H1 (cell line): ENCODE measurements at regions of chr16 and their contacts with region 1.

Region 1: DNA sequence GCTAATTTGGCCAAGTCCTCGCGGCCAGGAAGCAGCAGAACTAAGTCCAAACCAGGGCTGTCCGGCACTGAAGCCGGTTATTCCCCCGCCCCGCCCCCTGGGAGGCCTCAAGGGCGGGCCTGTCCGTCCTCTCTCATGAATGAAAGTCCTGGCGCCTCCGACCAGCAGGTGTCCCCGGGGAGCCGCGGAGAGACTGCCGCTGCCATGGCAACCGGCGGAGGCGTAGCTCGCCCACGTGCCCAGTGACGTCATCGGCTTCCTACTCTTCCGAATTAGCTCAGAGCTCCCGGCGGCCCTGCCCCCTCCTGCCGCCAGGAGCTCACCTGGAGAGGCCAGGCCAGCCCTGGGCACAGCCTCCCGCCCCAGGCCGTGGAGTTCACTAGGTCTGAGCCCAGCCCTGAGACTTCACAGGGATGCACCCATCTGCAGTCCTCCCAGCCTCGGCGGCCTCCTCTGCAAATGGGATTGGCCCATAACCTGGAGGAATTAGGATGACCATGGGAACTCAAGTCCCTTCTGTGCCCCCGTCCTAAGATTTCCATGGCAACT is 1.3 kb downstream of the SPATA2L start:
- DNase-seq: peak; percentile 98
- H3K4me3 ChIP-seq: peak overlapping the region; percentile 49 to 78 (median 74)
- H3K27ac ChIP-seq: peak overlapping the region; percentile 28; the same call in 1 of the 2 replicates
- H3K4me1 ChIP-seq: peaks cover 0 to 11% (median 5%) of the 10 kb centered on the region in 4 experiments; a peak in 5 of 7 replicates
- H3K27me3 ChIP-seq: peaks cover 0 to 9% (median 2%) of the 10 kb centered on the region in 4 experiments; a peak in 3 of 7 replicates
- CTCF ChIP-seq: peak; percentile 22 to 56 (median 32)
- EP300 ChIP-seq: peak in 1 of 2 experiments; percentile 73; a peak in 1 of 3 replicates
- POLR2A ChIP-seq: peak in 1 of 2 experiments; percentile 53; a peak in 1 of 3 replicates
- RAD21 ChIP-seq: peak; percentile 54 to 61

Region 2: GRCh38 chr16:89615596-89616090 is 84.5 kb before region 1 on chr16:
- CTCF ChIA-PET with region 1: interaction called, 15 read pairs
- POLR2A ChIA-PET with region 1: interaction called, 5 read pairs
- DNase-seq: peak in 1 of 2 experiments; percentile 92
- H3K4me3 ChIP-seq: no peak overlapping the region
- H3K27ac ChIP-seq: no peak overlapping the region
- H3K4me1 ChIP-seq: peaks cover 0 to 17% (median 5%) of the 10 kb centered on the region in 4 experiments; a peak in 5 of 7 replicates
- H3K27me3 ChIP-seq: no peaks in the 10 kb centered on the region; a peak in 2 of 7 replicates
- CTCF ChIP-seq: peak; percentile 72 to 90 (median 89)
- EP300 ChIP-seq: no peak
- POLR2A ChIP-seq: no peak
- RAD21 ChIP-seq: peak; percentile 55 to 75

Region 3: GRCh38 chr16:89711601-89712273 is 11.6 kb after region 1 on chr16:
- CTCF ChIA-PET with region 1: interaction called, 36 read pairs
- POLR2A ChIA-PET with region 1: interaction called, 98 read pairs
- DNase-seq: peak in 1 of 2 experiments; percentile 91
- H3K4me3 ChIP-seq: peak overlapping the region; percentile 73 to 91 (median 78)
- H3K27ac ChIP-seq: no peak overlapping the region
- H3K4me1 ChIP-seq: peaks cover 0 to 14% (median 11%) of the 10 kb centered on the region in 4 experiments; a peak in 6 of 7 replicates
- H3K27me3 ChIP-seq: peaks cover 0 to 5% (median 0%) of the 10 kb centered on the region in 4 experiments; a peak in 4 of 7 replicates
- CTCF ChIP-seq: no peak
- EP300 ChIP-seq: no peak
- POLR2A ChIP-seq: peak in 1 of 2 experiments; percentile 79; a peak in 2 of 3 replicates
- RAD21 ChIP-seq: no peak

Region 4: DNA sequence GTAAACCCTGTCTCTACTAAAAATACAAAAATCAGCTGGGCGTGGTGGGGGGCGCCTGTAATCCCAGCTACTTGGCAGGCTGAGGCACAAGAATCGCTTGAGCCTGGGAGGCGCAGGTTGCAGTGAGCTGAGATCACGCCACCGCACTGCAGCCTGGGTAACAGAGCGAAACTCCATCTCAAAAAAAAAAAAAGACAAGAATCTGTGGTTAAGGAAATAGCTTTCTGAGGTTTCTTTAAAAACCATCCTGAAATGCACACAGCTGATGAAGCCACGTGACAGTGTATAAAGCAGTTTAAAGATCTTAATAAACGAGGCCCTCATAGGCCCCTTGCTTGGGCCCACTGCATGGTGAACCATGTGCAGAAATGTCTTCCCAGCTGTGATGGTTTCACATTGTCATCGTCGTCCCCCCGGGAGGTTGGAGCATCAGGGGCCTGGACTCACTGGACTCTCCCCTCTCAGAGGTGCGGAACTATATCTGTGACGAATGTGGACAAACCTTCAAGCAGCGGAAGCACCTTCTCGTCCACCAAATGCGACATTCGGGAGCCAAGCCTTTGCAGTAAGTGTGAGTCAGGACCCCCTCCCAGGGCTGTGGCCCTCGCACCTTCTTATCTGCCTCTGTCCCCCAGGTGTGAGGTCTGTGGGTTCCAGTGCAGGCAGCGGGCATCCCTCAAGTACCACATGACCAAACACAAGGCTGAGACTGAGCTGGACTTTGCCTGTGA is 37.3 kb after region 1 on chr16:
- CTCF ChIA-PET with region 1: interaction called, 69 read pairs
- POLR2A ChIA-PET with region 1: interaction called, 193 read pairs
- DNase-seq: no peak
- H3K4me3 ChIP-seq: no peak overlapping the region
- H3K27ac ChIP-seq: no peak overlapping the region; the same call in 1 of the 2 replicates
- H3K4me1 ChIP-seq: no peaks in the 10 kb centered on the region
- H3K27me3 ChIP-seq: no peaks in the 10 kb centered on the region
- CTCF ChIP-seq: no peak
- EP300 ChIP-seq: no peak
- POLR2A ChIP-seq: no peak
- RAD21 ChIP-seq: no peak

Region 5: DNA sequence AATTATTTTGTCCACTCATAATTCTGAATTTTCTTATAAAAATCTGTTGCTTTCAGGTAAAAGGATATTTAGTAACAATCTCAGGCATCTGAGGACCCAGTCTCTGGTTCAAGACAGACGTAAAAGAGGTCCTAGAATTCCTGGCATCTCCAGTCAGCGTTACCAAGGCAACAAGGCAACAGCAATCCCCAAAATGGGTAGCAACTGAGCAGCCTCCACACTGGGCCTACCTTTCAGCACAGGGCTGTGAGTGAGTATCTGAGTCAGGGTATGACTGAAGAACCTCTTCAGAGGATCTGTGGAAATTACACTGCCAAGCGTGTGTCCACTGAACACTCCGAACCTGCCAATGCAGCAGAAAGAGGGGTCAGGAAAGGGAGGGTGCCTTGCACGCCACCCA is 95.5 kb after region 1 on chr16:
- CTCF ChIA-PET with region 1: interaction called, 22 read pairs
- POLR2A ChIA-PET with region 1: interaction called, 3 read pairs
- DNase-seq: no peak
- H3K4me3 ChIP-seq: no peak overlapping the region
- H3K27ac ChIP-seq: no peak overlapping the region
- H3K4me1 ChIP-seq: no peaks in the 10 kb centered on the region
- H3K27me3 ChIP-seq: no peaks in the 10 kb centered on the region
- CTCF ChIP-seq: no peak
- EP300 ChIP-seq: no peak
- POLR2A ChIP-seq: no peak
- RAD21 ChIP-seq: no peak

Region 6: DNA sequence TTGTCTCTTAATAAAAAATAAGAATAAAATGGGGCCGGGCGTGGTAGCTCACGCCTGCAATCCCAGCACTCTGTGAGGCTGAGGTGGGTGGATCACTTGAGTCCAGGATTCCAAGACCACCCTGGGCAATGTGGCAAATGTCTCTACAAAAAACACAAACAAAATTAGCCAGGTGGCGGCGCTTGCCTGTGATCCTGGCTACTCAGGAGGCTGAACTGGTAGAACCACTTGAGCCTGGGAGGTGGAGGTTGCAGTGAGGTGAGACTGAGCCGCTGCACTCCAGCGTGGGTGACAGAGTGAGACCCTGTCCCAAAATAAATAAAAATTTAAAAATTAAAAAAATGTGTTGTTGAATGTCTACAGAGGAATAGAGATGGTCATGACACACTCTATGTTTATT is 245.5 kb after region 1 on chr16:
- CTCF ChIA-PET with region 1: no interaction called
- POLR2A ChIA-PET with region 1: no interaction called
- DNase-seq: no peak
- H3K4me3 ChIP-seq: no peak overlapping the region
- H3K27ac ChIP-seq: no peak overlapping the region
- H3K4me1 ChIP-seq: peaks cover 0 to 7% (median 5%) of the 10 kb centered on the region in 4 experiments; a peak in 5 of 7 replicates
- H3K27me3 ChIP-seq: peaks cover 3 to 28% (median 22%) of the 10 kb centered on the region in 4 experiments
- CTCF ChIP-seq: peak in 2 of 3 experiments; percentile 9 to 11; a peak in 3 of 4 replicates
- EP300 ChIP-seq: no peak
- POLR2A ChIP-seq: no peak
- RAD21 ChIP-seq: peak in 1 of 2 experiments; percentile 28; a peak in 1 of 4 replicates